ENCODE measurements at regions of chr9 and their contacts with region 1.

Region 1: DNA sequence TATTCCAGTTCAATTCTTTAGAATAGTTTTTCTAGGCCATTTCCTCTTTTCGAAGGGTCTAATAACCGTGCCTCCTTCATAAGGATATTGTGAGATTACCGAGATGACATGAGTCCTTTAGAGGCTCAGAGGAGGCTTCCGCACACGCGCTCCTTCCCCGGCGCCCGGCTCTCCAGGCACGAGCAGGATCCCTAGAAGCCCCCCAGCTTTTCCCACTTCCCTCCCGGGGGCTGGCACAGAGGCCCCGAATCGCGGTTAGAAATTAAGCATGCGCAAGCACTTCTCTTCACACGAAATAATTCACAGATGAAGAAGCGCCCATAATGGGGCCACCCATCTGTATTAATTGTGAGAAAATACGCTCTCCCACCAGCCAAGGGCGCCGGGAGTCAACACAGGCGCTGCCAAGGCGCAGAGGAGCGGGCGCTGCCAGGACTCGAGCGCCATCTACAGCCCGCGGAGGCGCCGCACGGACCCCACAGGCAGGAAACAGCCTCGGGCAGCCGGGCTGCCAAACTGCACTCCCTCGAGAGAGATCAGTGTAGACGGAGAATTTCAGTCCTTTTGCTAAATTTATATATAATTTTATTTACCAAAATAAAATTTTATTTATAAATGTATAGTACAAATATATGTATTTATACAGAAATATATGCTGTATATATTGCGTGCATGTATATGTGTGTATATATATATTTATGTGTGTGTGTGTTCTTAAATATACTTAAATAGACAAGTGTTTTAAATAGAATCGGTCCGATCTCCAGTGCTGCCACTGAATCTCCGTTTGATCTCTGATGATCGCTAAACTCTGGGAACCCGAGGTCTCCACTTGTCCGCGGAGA is 258.1 kb upstream of the NFIL3 start:
- DNase-seq: peak; percentile 71
- ATAC-seq: peak; percentile 97
- H3K4me3 ChIP-seq: peak overlapping the region; percentile 49
- H3K27ac ChIP-seq: no peak overlapping the region
- H3K4me1 ChIP-seq: peaks cover 29% of the 10 kb centered on the region
- H3K27me3 ChIP-seq: no peaks in the 10 kb centered on the region
- CTCF ChIP-seq: peak; percentile 75

Region 2: DNA sequence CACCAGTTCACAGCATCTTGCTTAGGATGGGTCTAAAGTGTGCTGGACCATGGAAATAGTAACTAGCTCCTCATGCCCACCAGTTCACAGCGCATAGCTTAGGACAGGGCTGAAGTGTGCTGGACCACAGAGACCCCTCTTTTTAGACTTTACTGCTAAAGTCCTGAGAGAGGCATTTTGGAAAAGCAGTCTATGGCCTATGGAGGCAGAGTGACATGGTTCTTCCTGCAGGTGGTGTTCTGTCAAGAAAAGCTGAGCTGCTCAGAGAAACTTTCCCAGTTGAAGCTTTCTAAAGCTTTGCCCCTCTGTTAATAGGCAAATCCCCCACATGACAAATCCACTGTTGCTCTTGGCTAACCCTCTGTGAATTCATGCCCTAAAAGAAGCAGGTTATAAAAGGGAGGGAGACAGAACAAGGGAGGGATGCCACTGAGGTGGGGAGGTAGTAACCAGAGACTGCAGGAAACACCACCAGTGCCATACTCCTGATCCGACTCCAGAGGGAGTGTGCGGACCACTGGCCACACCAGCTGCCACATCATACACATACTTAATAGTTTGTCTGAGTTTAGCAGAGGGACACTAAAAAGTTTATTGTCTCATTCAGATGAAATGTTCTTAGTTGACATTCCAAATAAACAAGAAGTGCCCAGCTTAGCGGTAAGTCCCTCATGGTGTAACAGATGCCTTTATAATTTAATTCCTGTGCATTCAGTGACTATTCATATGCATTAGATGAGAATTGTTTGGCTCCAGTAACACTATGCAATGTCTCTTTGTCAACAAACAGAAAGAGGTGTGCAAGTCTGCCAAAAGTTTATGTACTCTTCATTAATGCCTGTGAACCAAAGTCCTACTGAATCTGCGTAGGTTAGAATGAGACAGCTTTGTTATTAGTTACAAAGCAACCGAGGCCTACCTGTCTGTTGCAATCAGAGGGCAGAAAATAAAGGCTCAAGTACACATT is 21.9 kb before region 1 on chr9:
- CTCF ChIA-PET with region 1: no interaction called
- POLR2A ChIA-PET with region 1: no interaction called
- intact Hi-C with region 1: loop called (anchors 2 kb)
- DNase-seq: peak; percentile 23
- ATAC-seq: peak; percentile 92
- H3K4me3 ChIP-seq: no peak overlapping the region
- H3K27ac ChIP-seq: no peak overlapping the region
- H3K4me1 ChIP-seq: no peaks in the 10 kb centered on the region
- H3K27me3 ChIP-seq: no peaks in the 10 kb centered on the region
- CTCF ChIP-seq: peak; percentile 58

Region 3: DNA sequence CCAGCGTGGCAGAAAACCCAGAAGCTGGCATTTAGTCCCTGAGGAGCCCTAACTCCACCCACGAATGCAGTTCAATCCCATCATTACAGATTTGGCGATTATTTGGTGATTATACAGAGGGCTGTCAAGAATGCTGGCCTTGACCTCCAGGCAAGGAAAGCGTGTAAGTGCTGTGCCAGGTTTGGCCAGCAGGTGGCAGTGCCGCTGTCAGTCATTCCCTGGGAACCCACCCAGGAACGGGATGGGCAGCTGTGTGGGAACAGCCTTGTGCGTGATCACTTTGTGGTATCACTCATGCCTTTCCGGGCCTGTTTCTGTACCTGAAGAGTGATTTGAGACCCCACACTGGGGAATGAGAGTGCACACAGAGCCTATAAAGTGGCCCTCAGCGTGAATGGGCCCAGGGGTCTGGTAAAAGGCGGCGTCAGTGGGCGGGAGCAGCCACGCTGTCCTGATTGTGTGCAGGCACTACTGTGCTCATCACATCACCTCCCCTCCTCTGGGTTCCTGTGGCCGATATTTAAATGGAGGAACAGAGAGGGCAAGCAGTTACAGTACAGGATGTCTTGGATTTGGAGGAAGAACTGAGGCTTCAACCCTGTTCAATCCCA is 52.8 kb after region 1 on chr9:
- CTCF ChIA-PET with region 1: no interaction called
- POLR2A ChIA-PET with region 1: no interaction called
- intact Hi-C with region 1: no loop called
- DNase-seq: peak; percentile 56
- ATAC-seq: peak; percentile 54; the same call in 1 of the 2 replicates
- H3K4me3 ChIP-seq: no peak overlapping the region
- H3K27ac ChIP-seq: no peak overlapping the region
- H3K4me1 ChIP-seq: no peaks in the 10 kb centered on the region
- H3K27me3 ChIP-seq: peaks cover 5% of the 10 kb centered on the region; the same call in 1 of the 2 replicates
- CTCF ChIP-seq: peak; percentile 87

Region 4: GRCh38 chr9:92133949-92134604 is 452.4 kb after region 1 on chr9:
- CTCF ChIA-PET with region 1: no interaction called
- POLR2A ChIA-PET with region 1: no interaction called
- intact Hi-C with region 1: no loop called
- DNase-seq: peak; percentile 90
- ATAC-seq: peak; percentile 75
- H3K4me3 ChIP-seq: peak overlapping the region; percentile 53
- H3K27ac ChIP-seq: no peak overlapping the region
- H3K4me1 ChIP-seq: peaks cover 5% of the 10 kb centered on the region; the same call in 1 of the 2 replicates
- H3K27me3 ChIP-seq: no peaks in the 10 kb centered on the region
- CTCF ChIP-seq: peak; percentile 79

Measured in PC-3 (cell line).